ENCODE measurements at regions of chr22 and their contacts with region 1.

Region 1: GRCh38 chr22:20606041-20606783 is 98.8 kb downstream of the MED15 start:
- DNase-seq: peak; percentile 86
- H3K4me3 Mint-ChIP-seq: no peak overlapping the region
- H3K27ac Mint-ChIP-seq: no peak overlapping the region
- H3K4me1 Mint-ChIP-seq: no peaks in the 10 kb centered on the region
- H3K27me3 Mint-ChIP-seq: peaks cover 32% of the 10 kb centered on the region
- CTCF ChIP-seq: peak; percentile 87

Region 2: DNA sequence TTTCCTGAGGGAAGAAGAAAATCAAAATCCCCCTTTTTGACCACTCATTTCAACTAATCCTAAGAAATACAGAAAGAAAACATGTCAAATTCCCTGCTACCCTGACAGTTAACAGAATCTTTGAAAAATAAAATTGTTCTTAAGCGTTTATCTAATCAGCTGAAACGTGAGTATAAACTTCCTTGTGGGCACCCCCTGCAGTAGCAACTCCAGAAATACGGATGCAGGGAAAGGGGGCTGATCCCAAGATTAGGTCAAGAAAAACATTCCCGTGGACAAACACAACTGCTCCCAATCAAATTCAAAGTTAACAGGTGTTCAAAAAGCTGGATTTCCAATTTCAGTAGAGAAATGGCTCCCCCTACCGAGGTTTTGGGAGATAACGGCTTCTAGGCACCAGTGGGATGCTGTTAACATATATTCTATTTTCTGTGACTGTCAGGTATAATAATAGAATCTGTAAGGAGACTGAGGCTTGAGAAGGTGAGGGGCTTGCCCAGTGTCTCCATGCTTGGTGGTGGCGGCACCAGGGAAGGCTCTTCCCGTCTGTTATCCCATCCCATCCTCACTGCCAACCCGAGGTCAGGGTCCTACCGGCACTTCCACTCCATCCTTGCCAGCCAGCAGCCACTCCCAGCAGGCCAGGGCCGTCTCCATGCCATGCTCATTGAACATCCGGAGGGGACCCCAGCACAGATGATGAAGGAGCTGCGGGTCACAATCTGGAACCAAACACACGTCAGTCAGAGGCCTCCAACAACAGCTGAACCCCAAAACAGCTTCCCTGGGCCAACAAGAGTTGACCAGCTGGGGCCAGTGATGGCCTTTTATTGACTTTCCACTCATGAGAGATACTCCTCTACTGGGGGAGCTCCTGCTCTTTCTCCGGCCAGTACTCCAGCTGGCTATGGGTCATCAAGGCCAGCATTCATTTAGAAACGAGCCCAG is 135.7 kb after region 1 on chr22:
- CTCF ChIA-PET with region 1: no interaction called
- intact Hi-C with region 1: loop called (anchors 2 kb)
- DNase-seq: peak; percentile 59
- H3K4me3 Mint-ChIP-seq: no peak overlapping the region
- H3K27ac Mint-ChIP-seq: no peak overlapping the region
- H3K4me1 Mint-ChIP-seq: no peaks in the 10 kb centered on the region
- H3K27me3 Mint-ChIP-seq: no peaks in the 10 kb centered on the region
- CTCF ChIP-seq: peak; percentile 72

Measured in Calu3 (cell line).